ENCODE measurements at regions of chr6 and their contacts with region 1.

Region 1: DNA sequence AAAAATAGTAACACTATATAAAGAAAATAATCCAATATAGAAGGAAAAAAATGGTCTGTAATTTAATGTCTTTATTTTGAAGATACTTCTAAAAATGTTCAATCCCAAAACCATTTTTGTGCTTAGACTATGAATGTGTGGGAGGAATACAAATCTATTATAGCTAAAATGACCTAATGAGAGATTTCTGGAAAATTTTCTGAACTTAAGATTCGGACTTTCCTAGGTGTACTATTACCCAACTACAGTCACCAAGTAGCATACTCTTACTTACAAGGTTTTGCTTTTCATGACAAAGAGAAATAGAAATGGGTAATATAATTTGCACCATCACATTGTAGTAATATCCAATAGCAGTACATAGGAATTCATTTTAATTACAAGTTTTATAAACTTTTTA is 29.9 kb downstream of the MAP3K7 start:
- DNase-seq: no peak
- H3K4me3 ChIP-seq: no peak overlapping the region
- H3K27ac ChIP-seq: no peak overlapping the region
- H3K4me1 ChIP-seq: peaks cover 5% of the 10 kb centered on the region
- H3K27me3 ChIP-seq: no peaks in the 10 kb centered on the region
- CTCF ChIP-seq: no peak
- POLR2A ChIP-seq: no peak

Region 2: DNA sequence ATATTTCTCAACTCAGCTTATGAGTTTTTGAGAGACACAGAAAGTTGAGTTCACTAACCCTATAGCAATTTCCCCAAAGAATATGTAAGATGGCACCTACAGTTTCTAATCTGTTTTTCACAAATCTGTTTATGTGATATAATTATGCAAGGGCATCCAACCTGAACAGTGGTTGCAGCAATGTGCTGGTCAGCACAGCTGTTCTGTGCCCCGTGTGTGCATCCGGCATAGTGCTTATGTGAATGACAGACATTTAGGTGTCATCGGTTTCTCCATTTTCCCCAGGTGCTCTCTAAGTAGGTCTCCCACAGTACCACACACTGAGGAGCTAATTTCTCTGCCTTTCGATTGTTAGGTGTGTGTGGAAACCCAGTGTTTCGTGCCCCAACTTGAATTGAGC is 252.7 kb before region 1 on chr6:
- CTCF ChIA-PET with region 1: no interaction called
- POLR2A ChIA-PET with region 1: no interaction called
- dilution Hi-C with region 1: no loop called
- intact Hi-C with region 1: no loop called
- DNase-seq: no peak
- H3K4me3 ChIP-seq: no peak overlapping the region
- H3K27ac ChIP-seq: no peak overlapping the region
- H3K4me1 ChIP-seq: no peaks in the 10 kb centered on the region
- H3K27me3 ChIP-seq: peaks cover 14 to 51% of the 10 kb centered on the region in 2 experiments
- CTCF ChIP-seq: no peak
- POLR2A ChIP-seq: no peak

Region 3: GRCh38 chr6:90537723-90538258 is 19.2 kb before region 1 on chr6:
- CTCF ChIA-PET with region 1: interaction called, 4 read pairs
- POLR2A ChIA-PET with region 1: no interaction called
- dilution Hi-C with region 1: no loop called
- intact Hi-C with region 1: loop called (anchors 1 kb)
- DNase-seq: no peak
- H3K4me3 ChIP-seq: no peak overlapping the region
- H3K27ac ChIP-seq: no peak overlapping the region
- H3K4me1 ChIP-seq: no peaks in the 10 kb centered on the region
- H3K27me3 ChIP-seq: no peaks in the 10 kb centered on the region
- CTCF ChIP-seq: no peak
- POLR2A ChIP-seq: no peak

Region 4: GRCh38 chr6:90586836-90587638 is 30.0 kb after region 1 on chr6 and contains the start of gene MAP3K7:
- CTCF ChIA-PET with region 1: no interaction called
- POLR2A ChIA-PET with region 1: no interaction called
- dilution Hi-C with region 1: no loop called
- intact Hi-C with region 1: no loop called
- DNase-seq: peak; percentile 98
- H3K4me3 ChIP-seq: peak within 1 kb of the TSS; percentile 84 to 100 (median 95)
- H3K27ac ChIP-seq: peak within 1 kb of the TSS; percentile 88
- H3K4me1 ChIP-seq: peaks cover 22% of the 10 kb centered on the region
- H3K27me3 ChIP-seq: peaks cover 2 to 4% of the 10 kb centered on the region in 2 experiments
- CTCF ChIP-seq: no peak
- POLR2A ChIP-seq: peak; percentile 86
- total RNA-seq, gene MAP3K7: 24.5 and 25.6 TPM in 2 replicates

Measured in endothelial cell of umbilical vein (primary cell).